GM10248 (cell line): ENCODE measurements at regions of chr2 and their contacts with region 1.

Region 1: GRCh38 chr2:20689428-20690264 is 22.7 kb downstream of the GDF7 start:
- DNase-seq: no peak
- CTCF ChIP-seq: no peak

Region 2: DNA sequence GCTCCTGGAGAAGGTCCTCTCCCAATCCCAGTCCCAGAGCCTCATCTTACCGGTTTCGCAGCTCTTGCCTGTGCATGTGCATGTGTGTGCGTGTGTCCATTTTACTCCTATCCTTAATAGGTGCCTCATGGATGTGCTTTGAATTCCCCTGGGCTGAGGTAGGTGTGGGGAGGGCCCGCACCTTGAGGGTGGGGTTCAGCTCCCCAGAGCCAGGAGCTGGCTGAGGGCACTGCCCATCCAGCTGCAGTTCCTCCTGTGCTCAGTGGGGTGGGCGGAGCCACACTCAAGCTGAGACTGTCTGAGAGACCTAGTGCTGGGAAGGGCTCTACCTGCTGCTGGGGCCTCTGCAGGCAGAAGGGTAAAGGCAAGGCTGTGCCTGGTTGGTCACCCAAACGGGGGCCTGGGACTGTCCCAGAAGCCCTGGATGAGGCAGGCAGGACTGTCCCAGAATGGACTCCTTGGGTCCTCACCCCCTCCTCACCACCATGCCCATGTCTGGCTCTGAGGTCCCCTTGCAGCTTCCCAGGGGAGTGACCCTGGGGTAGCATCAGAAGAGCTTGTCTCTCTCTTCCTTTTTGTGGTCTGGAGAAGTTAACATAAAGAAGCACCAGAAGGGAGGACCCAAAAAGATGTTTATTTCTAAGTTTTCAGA is 13.8 kb before region 1 on chr2:
- CTCF ChIA-PET with region 1: interaction called, 18 read pairs
- POLR2A ChIA-PET with region 1: no interaction called
- DNase-seq: no peak
- CTCF ChIP-seq: no peak